Heart left ventricle (tissue), 16 donors: ENCODE measurements at regions of chr6 and their contacts with region 1.

Region 1: GRCh38 chr6:24431045-24431451 is 28.3 kb downstream of the MRS2 start:
- DNase-seq: peak in 1 of 5 donors; percentile 18
- ATAC-seq: peak in 2 of 4 donors; percentile 54 to 59
- H3K4me3 ChIP-seq: no peak overlapping the region
- H3K27ac ChIP-seq: no peak overlapping the region
- H3K4me1 ChIP-seq: no peaks in the 10 kb centered on the region
- H3K27me3 ChIP-seq: no peaks in the 10 kb centered on the region
- CTCF ChIP-seq: peak; percentile 56 to 78 (median 70)
- POLR2A ChIP-seq: no peak

Region 2: GRCh38 chr6:24494821-24495795 is 64.1 kb after region 1 on chr6 and contains the start of gene ALDH5A1:
- intact Hi-C with region 1: loop called in 1 of 10 experiments (anchors 5 kb)
- DNase-seq: peak; percentile 73 to 87 (median 81)
- ATAC-seq: peak; percentile 82 to 93 (median 86)
- H3K4me3 ChIP-seq: peak within 1 kb of the TSS; percentile 58 to 96 (median 71)
- H3K27ac ChIP-seq: peak within 1 kb of the TSS; percentile 75 to 92 (median 86)
- H3K4me1 ChIP-seq: peaks cover 0 to 22% (median 8%) of the 10 kb centered on the region in 12 donors
- H3K27me3 ChIP-seq: peaks cover 0 to 5% (median 0%) of the 10 kb centered on the region in 9 donors
- CTCF ChIP-seq: peak in 10 of 12 donors; percentile 3 to 51 (median 18)
- POLR2A ChIP-seq: no peak
- total RNA-seq, gene ALDH5A1: 16.6 to 35.5 (median 20.6) TPM

Region 3: DNA sequence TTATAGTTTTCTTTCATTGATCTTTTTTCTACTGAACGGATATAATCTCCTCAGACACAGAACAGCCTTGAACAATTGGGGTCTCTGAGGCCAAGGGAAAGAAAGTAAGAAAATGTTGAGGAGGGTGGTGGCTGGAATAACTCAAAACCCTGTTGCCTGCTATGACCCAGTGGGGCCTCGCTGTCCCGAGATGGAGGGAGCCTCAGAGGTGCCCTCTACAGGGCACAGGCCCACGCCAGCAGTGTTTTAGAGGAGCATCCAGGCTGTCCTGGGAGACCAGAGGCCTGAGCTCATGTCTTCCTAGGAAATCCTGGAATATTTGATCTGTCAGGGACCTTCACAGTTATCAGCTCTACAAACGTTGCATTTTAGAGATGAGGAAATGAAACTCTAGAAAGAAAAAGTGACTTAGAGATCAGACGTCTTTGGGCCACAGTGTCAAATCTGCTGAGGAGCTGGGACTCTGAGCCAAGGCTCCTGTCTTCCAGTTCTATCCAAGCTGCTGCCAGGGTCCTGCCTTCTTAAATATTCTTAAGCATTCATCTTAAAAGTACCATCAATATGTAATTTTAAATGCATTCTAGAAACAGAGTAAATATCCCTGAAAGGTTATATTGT is 90.0 kb after region 1 on chr6:
- intact Hi-C with region 1: loop called in 6 of 10 experiments (anchors 2 to 10 kb)
- DNase-seq: peak in 4 of 5 donors; percentile 24 to 67 (median 50)
- ATAC-seq: peak; percentile 47 to 88 (median 85)
- H3K4me3 ChIP-seq: no peak overlapping the region
- H3K27ac ChIP-seq: no peak overlapping the region
- H3K4me1 ChIP-seq: no peaks in the 10 kb centered on the region
- H3K27me3 ChIP-seq: no peaks in the 10 kb centered on the region
- CTCF ChIP-seq: peak; percentile 33 to 64 (median 51)
- POLR2A ChIP-seq: no peak

Region 4: GRCh38 chr6:24689964-24690363 is 258.9 kb after region 1 on chr6:
- intact Hi-C with region 1: loop called in 5 of 10 experiments (anchors 2 to 10 kb)
- DNase-seq: no peak
- ATAC-seq: peak in 1 of 4 donors; percentile 68
- H3K4me3 ChIP-seq: no peak overlapping the region
- H3K27ac ChIP-seq: no peak overlapping the region
- H3K4me1 ChIP-seq: peaks cover 0 to 26% (median 7%) of the 10 kb centered on the region in 12 donors
- H3K27me3 ChIP-seq: no peaks in the 10 kb centered on the region
- CTCF ChIP-seq: no peak
- POLR2A ChIP-seq: no peak

Region 5: GRCh38 chr6:24699521-24700359 is 268.7 kb after region 1 on chr6:
- intact Hi-C with region 1: loop called in 7 of 10 experiments (anchors 2 to 10 kb)
- DNase-seq: no peak
- ATAC-seq: peak in 1 of 4 donors; percentile 46
- H3K4me3 ChIP-seq: no peak overlapping the region
- H3K27ac ChIP-seq: peak overlapping the region in 1 of 12 donors; percentile 0
- H3K4me1 ChIP-seq: peaks cover 0 to 12% (median 0%) of the 10 kb centered on the region in 12 donors
- H3K27me3 ChIP-seq: no peaks in the 10 kb centered on the region
- CTCF ChIP-seq: no peak
- POLR2A ChIP-seq: no peak

Region 6: GRCh38 chr6:24710519-24711303 is 279.7 kb after region 1 on chr6:
- intact Hi-C with region 1: loop called in 3 of 10 experiments (anchors 5 to 10 kb)
- DNase-seq: no peak
- ATAC-seq: peak in 1 of 4 donors; percentile 16
- H3K4me3 ChIP-seq: no peak overlapping the region
- H3K27ac ChIP-seq: no peak overlapping the region
- H3K4me1 ChIP-seq: peaks cover 3 to 50% (median 35%) of the 10 kb centered on the region in 12 donors
- H3K27me3 ChIP-seq: no peaks in the 10 kb centered on the region
- CTCF ChIP-seq: no peak
- POLR2A ChIP-seq: no peak

Region 7: DNA sequence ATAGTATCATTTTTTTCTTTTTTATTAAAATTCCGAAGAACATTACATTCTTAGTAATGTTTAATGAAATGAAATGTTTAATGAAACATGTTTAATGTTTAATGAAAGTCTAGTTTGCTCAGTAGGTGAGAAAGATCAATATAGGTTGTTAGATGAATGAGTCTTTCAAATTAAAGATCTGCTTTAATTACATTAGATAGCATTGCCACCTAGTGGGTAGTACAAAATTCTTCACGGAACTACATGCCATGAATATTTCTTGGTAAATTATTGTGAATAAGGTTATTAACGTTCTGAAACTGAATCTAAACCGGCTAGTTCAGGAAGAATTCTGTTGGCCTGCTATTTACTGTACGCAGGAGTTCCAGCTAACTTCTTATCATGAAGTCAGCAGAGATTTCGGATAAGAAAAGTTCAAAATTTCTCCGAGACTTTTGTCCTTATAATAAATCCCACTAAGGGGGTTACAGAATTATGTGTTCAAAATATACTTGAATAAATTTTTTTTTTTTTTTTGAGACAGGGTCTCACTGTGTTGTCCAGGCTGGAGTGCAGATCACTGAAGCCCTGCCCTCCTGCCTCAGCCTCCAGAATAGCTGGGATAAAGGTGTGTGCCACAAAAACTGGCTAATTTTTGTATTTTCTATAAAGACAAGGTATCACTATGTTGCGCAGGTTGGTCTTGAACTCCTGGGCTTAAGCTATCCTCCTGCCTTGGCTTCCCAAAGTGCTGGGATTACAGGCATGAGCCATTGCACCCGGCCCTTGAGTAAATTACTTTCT is 335.8 kb after region 1 on chr6:
- intact Hi-C with region 1: loop called in 1 of 10 experiments (anchors 10 kb)
- DNase-seq: no peak
- ATAC-seq: no peak
- H3K4me3 ChIP-seq: no peak overlapping the region
- H3K27ac ChIP-seq: no peak overlapping the region
- H3K4me1 ChIP-seq: no peaks in the 10 kb centered on the region
- H3K27me3 ChIP-seq: no peaks in the 10 kb centered on the region
- CTCF ChIP-seq: peak in 11 of 12 donors; percentile 27 to 60 (median 46)
- POLR2A ChIP-seq: no peak